ENCODE measurements at regions of chr20 and their contacts with region 1.

Region 1: GRCh38 chr20:23492292-23492691 is 1.4 kb downstream of the CST8 start:
- DNase-seq: no peak
- H3K4me3 ChIP-seq: no peak overlapping the region
- H3K27ac ChIP-seq: no peak overlapping the region
- H3K4me1 ChIP-seq: no peaks in the 10 kb centered on the region
- H3K27me3 ChIP-seq: no peaks in the 10 kb centered on the region
- CTCF ChIP-seq: no peak
- EP300 ChIP-seq: no peak
- POLR2A ChIP-seq: no peak

Region 2: DNA sequence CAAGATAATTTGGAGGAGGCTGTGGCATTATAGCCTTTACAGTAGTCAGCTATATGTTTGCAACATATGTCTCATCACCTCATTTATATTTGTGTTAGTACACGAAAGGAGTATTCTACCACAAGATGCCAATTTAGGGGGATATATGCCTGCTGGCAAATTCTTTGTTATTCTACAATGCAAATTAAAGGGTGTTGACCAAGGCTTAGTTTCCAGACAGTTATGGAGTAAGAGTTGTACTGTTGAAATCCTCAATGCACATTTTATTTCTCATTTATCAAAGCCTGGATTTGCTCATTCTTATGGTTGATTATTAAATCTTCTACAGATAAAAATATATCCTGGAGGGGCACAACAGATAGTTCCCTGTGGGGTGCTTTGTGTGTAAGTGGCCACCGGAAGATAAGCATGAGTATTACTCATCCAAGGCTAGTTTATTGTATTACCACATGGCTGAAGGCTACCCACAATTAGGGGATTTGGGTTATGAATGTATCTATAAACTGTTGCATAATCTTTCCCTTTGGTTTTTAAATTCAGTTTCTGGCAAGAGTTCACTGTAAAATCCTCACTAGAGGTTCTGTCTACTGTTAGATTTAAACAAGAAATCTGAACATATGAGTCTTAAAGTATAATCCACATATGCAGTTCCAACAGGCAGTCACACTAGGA is 104.4 kb after region 1 on chr20:
- in situ Hi-C with region 1: loop called in 1 of 4 experiments (anchors 25 kb)
- intact Hi-C with region 1: no loop called
- DNase-seq: no peak
- H3K4me3 ChIP-seq: no peak overlapping the region
- H3K27ac ChIP-seq: no peak overlapping the region
- H3K4me1 ChIP-seq: no peaks in the 10 kb centered on the region
- H3K27me3 ChIP-seq: no peaks in the 10 kb centered on the region
- CTCF ChIP-seq: no peak
- EP300 ChIP-seq: no peak
- POLR2A ChIP-seq: no peak

Region 3: GRCh38 chr20:24124936-24125650 is 632.8 kb after region 1 on chr20:
- in situ Hi-C with region 1: no loop called
- intact Hi-C with region 1: no loop called
- DNase-seq: no peak
- H3K4me3 ChIP-seq: no peak overlapping the region
- H3K27ac ChIP-seq: no peak overlapping the region
- H3K4me1 ChIP-seq: no peaks in the 10 kb centered on the region
- H3K27me3 ChIP-seq: no peaks in the 10 kb centered on the region
- CTCF ChIP-seq: no peak
- EP300 ChIP-seq: no peak
- POLR2A ChIP-seq: no peak

Measured in transverse colon (tissue), 4 donors.